ENCODE measurements at regions of chr6 and their contacts with region 1.

Region 1: GRCh38 chr6:142692942-142693341 is 252.0 kb downstream of the HIVEP2 start:
- DNase-seq: peak; percentile 47 to 82 (median 71)
- ATAC-seq: peak; percentile 88
- H3K4me3 ChIP-seq: no peak overlapping the region
- H3K4me3 Mint-ChIP-seq: no peak overlapping the region
- H3K27ac ChIP-seq: no peak overlapping the region
- H3K27ac Mint-ChIP-seq: no peak overlapping the region
- H3K4me1 ChIP-seq: peaks cover 4% of the 10 kb centered on the region
- H3K4me1 Mint-ChIP-seq: peaks cover 6% of the 10 kb centered on the region
- H3K27me3 ChIP-seq: no peaks in the 10 kb centered on the region
- H3K27me3 Mint-ChIP-seq: no peaks in the 10 kb centered on the region
- CTCF ChIP-seq: peak; percentile 90

Region 2: GRCh38 chr6:142566628-142567396 is 126.1 kb before region 1 on chr6:
- CTCF ChIA-PET with region 1: interaction called, 5 read pairs
- POLR2A ChIA-PET with region 1: no interaction called
- intact Hi-C with region 1: loop called in 1 of 2 experiments (anchors 1 kb)
- DNase-seq: peak; percentile 22 to 72 (median 58)
- ATAC-seq: peak; percentile 57
- H3K4me3 ChIP-seq: no peak overlapping the region
- H3K4me3 Mint-ChIP-seq: no peak overlapping the region
- H3K27ac ChIP-seq: no peak overlapping the region
- H3K27ac Mint-ChIP-seq: no peak overlapping the region
- H3K4me1 ChIP-seq: peaks cover 47% of the 10 kb centered on the region
- H3K4me1 Mint-ChIP-seq: peaks cover 61% of the 10 kb centered on the region
- H3K27me3 ChIP-seq: no peaks in the 10 kb centered on the region
- H3K27me3 Mint-ChIP-seq: no peaks in the 10 kb centered on the region
- CTCF ChIP-seq: peak; percentile 75

Region 3: GRCh38 chr6:142740449-142740848 is 47.5 kb after region 1 on chr6:
- CTCF ChIA-PET with region 1: no interaction called
- POLR2A ChIA-PET with region 1: no interaction called
- intact Hi-C with region 1: no loop called
- DNase-seq: no peak
- ATAC-seq: no peak
- H3K4me3 ChIP-seq: no peak overlapping the region
- H3K4me3 Mint-ChIP-seq: no peak overlapping the region
- H3K27ac ChIP-seq: no peak overlapping the region
- H3K27ac Mint-ChIP-seq: no peak overlapping the region
- H3K4me1 ChIP-seq: no peaks in the 10 kb centered on the region
- H3K4me1 Mint-ChIP-seq: no peaks in the 10 kb centered on the region
- H3K27me3 ChIP-seq: no peaks in the 10 kb centered on the region
- H3K27me3 Mint-ChIP-seq: no peaks in the 10 kb centered on the region
- CTCF ChIP-seq: no peak

Region 4: DNA sequence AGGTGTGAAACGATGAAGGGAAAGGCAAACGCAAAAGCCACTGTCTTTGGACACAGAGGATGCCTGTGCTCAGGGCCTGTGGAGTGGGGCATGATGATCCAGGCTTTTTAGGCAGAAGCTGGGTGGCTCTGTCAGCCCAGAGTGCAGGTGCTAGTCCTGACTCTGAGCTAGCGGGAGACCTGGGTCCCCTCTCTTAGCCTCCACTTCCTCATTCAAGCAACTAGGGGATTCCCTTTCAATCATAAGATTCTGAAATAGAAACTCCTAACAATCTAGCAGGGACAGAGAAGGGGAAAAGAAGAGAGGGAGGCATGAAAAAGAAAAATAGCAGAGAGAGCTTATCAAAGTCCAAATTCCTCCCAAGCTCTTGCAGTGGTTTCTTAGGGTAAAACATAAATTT is 259.7 kb after region 1 on chr6:
- CTCF ChIA-PET with region 1: interaction called, 21 read pairs
- POLR2A ChIA-PET with region 1: no interaction called
- intact Hi-C with region 1: loop called (anchors 1 to 2 kb)
- DNase-seq: peak in 1 of 9 experiments; percentile 24
- ATAC-seq: no peak
- H3K4me3 ChIP-seq: no peak overlapping the region
- H3K4me3 Mint-ChIP-seq: no peak overlapping the region
- H3K27ac ChIP-seq: no peak overlapping the region
- H3K27ac Mint-ChIP-seq: peak overlapping the region; percentile 79
- H3K4me1 ChIP-seq: no peaks in the 10 kb centered on the region
- H3K4me1 Mint-ChIP-seq: peaks cover 18% of the 10 kb centered on the region
- H3K27me3 ChIP-seq: no peaks in the 10 kb centered on the region
- H3K27me3 Mint-ChIP-seq: no peaks in the 10 kb centered on the region
- CTCF ChIP-seq: no peak

Region 5: GRCh38 chr6:143007646-143008045 is 314.7 kb after region 1 on chr6:
- CTCF ChIA-PET with region 1: no interaction called
- POLR2A ChIA-PET with region 1: no interaction called
- intact Hi-C with region 1: no loop called
- DNase-seq: no peak
- ATAC-seq: no peak
- H3K4me3 ChIP-seq: no peak overlapping the region
- H3K4me3 Mint-ChIP-seq: no peak overlapping the region
- H3K27ac ChIP-seq: no peak overlapping the region
- H3K27ac Mint-ChIP-seq: no peak overlapping the region
- H3K4me1 ChIP-seq: no peaks in the 10 kb centered on the region
- H3K4me1 Mint-ChIP-seq: no peaks in the 10 kb centered on the region
- H3K27me3 ChIP-seq: no peaks in the 10 kb centered on the region
- H3K27me3 Mint-ChIP-seq: no peaks in the 10 kb centered on the region
- CTCF ChIP-seq: no peak

Region 6: GRCh38 chr6:143026696-143027449 is 333.9 kb after region 1 on chr6:
- CTCF ChIA-PET with region 1: interaction called, 63 read pairs
- POLR2A ChIA-PET with region 1: no interaction called
- intact Hi-C with region 1: loop called (anchors 1 kb)
- DNase-seq: peak; percentile 10 to 68 (median 55)
- ATAC-seq: peak; percentile 67
- H3K4me3 ChIP-seq: no peak overlapping the region
- H3K4me3 Mint-ChIP-seq: no peak overlapping the region
- H3K27ac ChIP-seq: no peak overlapping the region
- H3K27ac Mint-ChIP-seq: no peak overlapping the region
- H3K4me1 ChIP-seq: no peaks in the 10 kb centered on the region
- H3K4me1 Mint-ChIP-seq: no peaks in the 10 kb centered on the region
- H3K27me3 ChIP-seq: no peaks in the 10 kb centered on the region
- H3K27me3 Mint-ChIP-seq: no peaks in the 10 kb centered on the region
- CTCF ChIP-seq: peak; percentile 62

Region 7: DNA sequence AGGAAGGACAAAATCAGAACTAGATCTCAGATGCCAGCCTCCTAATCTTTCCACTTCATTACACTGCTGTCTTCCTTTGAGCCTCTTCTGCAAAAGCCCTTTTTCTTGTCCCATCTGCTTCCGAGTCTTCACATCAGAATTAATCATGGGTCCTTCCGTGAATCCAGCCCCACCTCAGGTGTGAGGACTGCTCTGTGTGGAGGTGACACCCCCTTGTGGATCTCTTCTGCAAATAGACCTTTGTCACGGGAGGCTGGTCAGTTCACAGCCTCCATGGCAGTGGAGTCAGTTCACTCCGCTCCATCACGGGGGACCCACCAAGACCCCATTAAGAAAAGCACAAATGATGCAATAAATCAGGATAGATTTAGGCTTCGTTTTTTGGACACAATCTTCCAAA is 586.4 kb after region 1 on chr6:
- CTCF ChIA-PET with region 1: interaction called, 6 read pairs
- POLR2A ChIA-PET with region 1: no interaction called
- intact Hi-C with region 1: loop called (anchors 2 to 5 kb)
- DNase-seq: peak in 2 of 9 experiments; percentile 5 to 21
- ATAC-seq: no peak
- H3K4me3 ChIP-seq: no peak overlapping the region
- H3K4me3 Mint-ChIP-seq: no peak overlapping the region
- H3K27ac ChIP-seq: no peak overlapping the region
- H3K27ac Mint-ChIP-seq: no peak overlapping the region
- H3K4me1 ChIP-seq: no peaks in the 10 kb centered on the region
- H3K4me1 Mint-ChIP-seq: no peaks in the 10 kb centered on the region
- H3K27me3 ChIP-seq: no peaks in the 10 kb centered on the region
- H3K27me3 Mint-ChIP-seq: no peaks in the 10 kb centered on the region
- CTCF ChIP-seq: no peak

Region 8: GRCh38 chr6:143337201-143337949 is 644.4 kb after region 1 on chr6:
- CTCF ChIA-PET with region 1: interaction called, 13 read pairs
- POLR2A ChIA-PET with region 1: no interaction called
- intact Hi-C with region 1: loop called (anchors 1 to 5 kb)
- DNase-seq: peak in 8 of 9 experiments; percentile 20 to 70 (median 42)
- ATAC-seq: no peak
- H3K4me3 ChIP-seq: no peak overlapping the region
- H3K4me3 Mint-ChIP-seq: no peak overlapping the region
- H3K27ac ChIP-seq: no peak overlapping the region
- H3K27ac Mint-ChIP-seq: no peak overlapping the region
- H3K4me1 ChIP-seq: no peaks in the 10 kb centered on the region
- H3K4me1 Mint-ChIP-seq: no peaks in the 10 kb centered on the region
- H3K27me3 ChIP-seq: no peaks in the 10 kb centered on the region
- H3K27me3 Mint-ChIP-seq: no peaks in the 10 kb centered on the region
- CTCF ChIP-seq: peak; percentile 36

Region 9: GRCh38 chr6:143501851-143502250 is 808.9 kb after region 1 on chr6:
- CTCF ChIA-PET with region 1: no interaction called
- POLR2A ChIA-PET with region 1: no interaction called
- intact Hi-C with region 1: loop called in 1 of 2 experiments (anchors 2 kb)
- DNase-seq: no peak
- ATAC-seq: no peak
- H3K4me3 ChIP-seq: no peak overlapping the region
- H3K4me3 Mint-ChIP-seq: no peak overlapping the region
- H3K27ac ChIP-seq: no peak overlapping the region
- H3K27ac Mint-ChIP-seq: no peak overlapping the region
- H3K4me1 ChIP-seq: peaks cover 6% of the 10 kb centered on the region
- H3K4me1 Mint-ChIP-seq: peaks cover 13% of the 10 kb centered on the region
- H3K27me3 ChIP-seq: no peaks in the 10 kb centered on the region
- H3K27me3 Mint-ChIP-seq: no peaks in the 10 kb centered on the region
- CTCF ChIP-seq: no peak

Measured in CD8-positive, alpha-beta T cell (primary cell).